IMR-90 (cell line): ENCODE measurements at regions of chr2 and their contacts with region 1.

Region 1: GRCh38 chr2:187710791-187711521 is 156.7 kb upstream of the TFPI start:
- DNase-seq: no peak
- ATAC-seq: no peak
- H3K4me3 ChIP-seq: no peak overlapping the region
- H3K27ac ChIP-seq: no peak overlapping the region
- H3K4me1 ChIP-seq: no peaks in the 10 kb centered on the region
- H3K27me3 ChIP-seq: no peaks in the 10 kb centered on the region
- CTCF ChIP-seq: no peak
- POLR2A ChIP-seq: no peak
- RAD21 ChIP-seq: no peak

Region 2: DNA sequence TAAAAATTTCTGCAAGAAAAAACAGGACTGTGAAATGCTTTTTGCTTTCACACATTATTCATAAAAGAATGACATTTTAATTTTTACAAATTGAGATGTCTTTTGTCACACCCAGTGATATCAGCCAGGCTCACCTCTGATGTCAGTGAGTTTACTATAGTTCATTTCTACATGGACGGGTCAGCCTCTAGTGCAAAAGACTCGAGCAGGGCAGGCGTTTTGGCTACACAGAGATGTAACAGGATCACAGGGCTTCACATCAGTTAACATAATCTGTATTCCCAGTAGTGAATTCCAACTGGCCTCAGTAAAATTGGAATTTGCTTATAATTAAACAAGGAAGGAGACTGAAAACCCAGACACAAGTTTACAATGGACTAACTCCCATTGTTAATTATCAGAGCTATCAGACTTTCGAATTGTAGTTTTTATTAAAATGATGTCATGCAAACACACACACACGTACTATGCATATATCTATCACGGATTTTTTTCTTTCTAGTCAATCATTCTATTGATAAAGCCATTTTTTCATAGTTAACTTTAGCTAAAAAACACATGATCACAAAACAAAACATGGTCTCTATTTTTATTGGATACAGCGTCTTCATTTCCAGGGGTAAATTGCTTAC is 586.3 kb before region 1 on chr2:
- CTCF ChIA-PET with region 1: no interaction called
- POLR2A ChIA-PET with region 1: no interaction called
- dilution Hi-C with region 1: no loop called
- in situ Hi-C with region 1: no loop called
- intact Hi-C with region 1: loop called (anchors 5 kb)
- DNase-seq: no peak
- ATAC-seq: no peak
- H3K4me3 ChIP-seq: no peak overlapping the region
- H3K27ac ChIP-seq: no peak overlapping the region
- H3K4me1 ChIP-seq: no peaks in the 10 kb centered on the region
- H3K27me3 ChIP-seq: no peaks in the 10 kb centered on the region
- CTCF ChIP-seq: no peak
- POLR2A ChIP-seq: no peak
- RAD21 ChIP-seq: no peak